ENCODE measurements at regions of chr20 and their contacts with region 1.

Region 1: DNA sequence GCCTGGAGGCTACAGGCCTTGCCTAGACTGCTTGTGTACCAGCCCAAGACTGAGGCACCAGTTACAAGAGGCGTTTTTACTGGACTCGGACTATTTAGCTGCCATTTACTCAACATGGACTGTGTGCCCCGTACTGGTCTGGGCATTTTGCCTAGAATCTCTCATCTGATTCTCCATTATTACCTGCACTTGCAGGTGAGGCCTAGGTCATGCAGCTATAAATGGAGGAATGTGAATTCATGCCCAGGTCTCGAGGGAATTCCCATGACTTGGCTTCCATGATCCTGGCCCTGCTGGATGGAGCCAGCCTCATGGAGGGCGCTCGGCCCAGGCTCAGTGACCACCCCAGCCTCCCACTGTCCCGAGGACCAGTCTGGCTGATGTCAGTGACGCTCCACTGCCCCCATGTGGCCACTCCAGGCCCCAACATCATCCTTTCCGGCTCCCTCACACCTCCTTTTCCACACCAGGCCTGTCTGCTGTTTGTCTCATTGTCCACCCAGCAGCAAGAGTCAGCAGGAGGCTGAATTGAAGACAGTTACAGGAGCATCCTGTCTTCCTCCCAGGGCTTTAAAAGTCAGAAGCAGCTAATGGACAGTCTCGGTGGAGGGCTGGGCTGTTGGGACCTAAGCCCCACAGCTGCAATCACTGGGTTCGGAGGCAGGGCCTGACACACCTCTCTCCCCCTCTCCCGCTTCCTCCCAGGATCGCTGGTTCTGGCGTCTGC is 8.7 kb downstream of the MMP24OS start:
- DNase-seq: no peak
- H3K4me3 ChIP-seq: no peak overlapping the region
- H3K27me3 ChIP-seq: no peaks in the 10 kb centered on the region
- CTCF ChIP-seq: peak; percentile 89

Region 2: GRCh38 chr20:34955232-34956040 is 313.8 kb before region 1 on chr20 and contains the starts of genes GSS and MYH7B:
- CTCF ChIA-PET with region 1: no interaction called
- POLR2A ChIA-PET with region 1: no interaction called
- DNase-seq: peak; percentile 68
- H3K4me3 ChIP-seq: peak within 1 kb of the TSS; percentile 82
- H3K27me3 ChIP-seq: no peaks in the 10 kb centered on the region
- CTCF ChIP-seq: peak; percentile 62
- polyA plus RNA-seq, gene GSS: 85.9 and 110 TPM in 2 replicates
- polyA plus RNA-seq, gene MYH7B: 0.01 and 0.05 TPM in 2 replicates

Region 3: GRCh38 chr20:34970193-34970840 is 298.9 kb before region 1 on chr20:
- CTCF ChIA-PET with region 1: no interaction called
- POLR2A ChIA-PET with region 1: no interaction called
- DNase-seq: no peak
- H3K4me3 ChIP-seq: no peak overlapping the region
- H3K27me3 ChIP-seq: 0 out of 2 replicates have a peak, but pooled peaks cover 5% of the 10 kb centered on the region
- CTCF ChIP-seq: no peak

Region 4: DNA sequence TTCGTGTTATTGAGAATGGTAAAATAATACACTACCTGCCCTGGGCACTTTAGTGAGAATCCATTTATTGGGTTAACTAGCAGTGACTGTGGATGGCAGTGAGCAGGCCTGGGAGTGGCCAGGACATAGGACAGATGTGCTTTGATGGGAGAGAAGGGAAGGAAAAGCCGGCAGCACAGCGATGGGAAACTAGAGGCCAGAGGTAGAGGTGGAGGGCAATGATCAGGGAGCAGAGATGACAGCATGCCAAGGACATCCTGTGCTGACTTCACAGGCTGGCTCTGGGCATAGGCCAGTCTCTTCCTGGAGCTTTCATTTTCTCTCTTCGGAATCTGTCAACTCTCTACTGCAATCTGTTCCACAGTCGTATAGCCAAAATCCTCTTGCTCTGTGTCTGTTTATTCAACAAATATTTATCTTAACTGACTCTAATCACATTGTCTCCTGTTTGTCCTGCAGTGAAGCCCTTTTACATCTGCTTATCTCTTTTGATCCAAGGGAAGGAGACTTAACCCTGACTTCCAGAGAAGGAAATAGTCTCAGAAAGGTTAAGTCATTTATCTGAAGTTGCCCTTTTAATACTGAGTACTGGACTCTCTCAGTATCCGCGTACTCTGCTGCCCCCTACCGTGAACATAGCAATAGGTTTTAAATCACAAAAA is 61.1 kb before region 1 on chr20:
- CTCF ChIA-PET with region 1: interaction called, 18 read pairs
- POLR2A ChIA-PET with region 1: no interaction called
- DNase-seq: no peak
- H3K4me3 ChIP-seq: no peak overlapping the region
- H3K27me3 ChIP-seq: no peaks in the 10 kb centered on the region
- CTCF ChIP-seq: peak; percentile 74

Region 5: DNA sequence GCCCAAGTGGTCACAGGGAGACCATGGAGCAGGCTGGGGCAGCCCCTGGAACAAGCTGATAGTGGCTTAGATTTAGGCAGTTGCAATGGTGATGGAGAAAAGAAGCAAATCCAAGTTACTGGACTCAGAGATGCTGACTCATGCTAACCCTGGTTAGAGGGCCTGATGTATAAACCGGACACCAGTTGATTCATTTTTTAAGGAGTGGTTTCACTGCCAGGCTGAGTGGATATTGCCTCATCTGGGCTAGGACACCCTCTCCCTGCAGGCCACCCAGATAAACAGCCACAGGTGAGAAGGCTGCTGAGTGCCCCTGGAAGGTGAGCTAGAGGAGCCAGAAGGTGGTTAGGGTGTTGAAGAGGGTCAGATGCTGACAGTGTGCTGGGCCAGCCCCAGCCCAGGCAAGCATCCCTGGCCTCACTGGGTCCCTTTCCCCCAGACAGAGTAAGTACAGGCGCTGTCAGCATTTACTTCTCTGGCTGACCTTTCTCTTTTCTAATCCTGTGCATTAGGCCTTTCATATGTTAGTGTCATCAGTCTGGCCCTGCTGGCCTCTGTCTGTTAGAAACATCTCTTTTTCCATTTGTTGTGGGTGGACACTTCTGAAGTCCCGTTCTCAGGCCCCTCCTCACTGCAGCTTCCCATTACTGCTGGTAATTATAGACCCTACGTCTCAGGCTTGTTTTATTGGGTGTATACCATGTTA is 898.8 kb after region 1 on chr20:
- CTCF ChIA-PET with region 1: no interaction called
- POLR2A ChIA-PET with region 1: no interaction called
- DNase-seq: no peak
- H3K4me3 ChIP-seq: no peak overlapping the region
- H3K27me3 ChIP-seq: no peaks in the 10 kb centered on the region
- CTCF ChIP-seq: no peak

Region 6: DNA sequence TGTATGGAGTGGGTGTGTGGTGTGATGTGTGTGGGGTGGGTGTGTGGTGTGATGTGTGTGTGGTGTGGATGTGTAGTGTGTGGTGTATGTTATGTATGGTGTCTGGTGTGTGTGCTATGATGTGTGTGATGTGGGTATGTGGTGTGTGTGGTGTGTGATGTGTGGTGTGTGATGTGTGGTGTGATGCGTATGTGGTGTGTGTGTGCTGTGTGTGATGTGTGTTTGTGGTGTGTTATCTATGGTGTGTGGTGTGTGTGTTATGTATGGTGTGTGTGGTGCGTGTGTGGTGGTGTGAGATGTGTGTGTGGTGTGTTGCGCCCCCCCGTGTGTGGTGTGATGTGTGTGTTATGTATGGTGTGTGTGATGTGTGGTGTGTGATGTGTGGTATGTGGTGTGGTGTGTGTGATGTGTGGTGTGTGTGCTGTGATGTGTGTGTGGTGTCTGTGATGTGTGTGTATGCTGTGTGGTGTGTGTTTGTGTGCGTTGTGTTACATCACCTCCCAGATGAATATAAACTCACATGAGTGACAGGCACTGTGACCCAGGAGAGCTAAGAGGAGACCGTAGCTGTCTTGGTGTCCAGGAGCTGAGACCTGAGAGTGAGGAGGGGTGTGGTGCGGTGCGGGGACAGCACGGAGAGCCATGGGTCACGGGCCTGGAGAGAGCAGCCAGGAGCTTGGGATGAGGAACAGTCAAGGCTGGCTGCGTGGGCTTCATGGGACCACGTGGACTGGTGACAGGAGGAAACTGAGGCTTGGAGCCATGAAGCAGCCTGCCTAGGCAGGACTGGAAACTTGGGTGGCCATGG is 1045.7 kb after region 1 on chr20:
- CTCF ChIA-PET with region 1: no interaction called
- POLR2A ChIA-PET with region 1: no interaction called
- DNase-seq: no peak
- H3K4me3 ChIP-seq: no peak overlapping the region
- H3K27me3 ChIP-seq: peaks cover 9% of the 10 kb centered on the region
- CTCF ChIP-seq: no peak